ENCODE measurements at regions of chr13 and their contacts with region 1.

Region 1: GRCh38 chr13:51844862-51845573 is at the start of gene TMEM272:
- DNase-seq: peak; percentile 87
- H3K4me3 ChIP-seq: peak within 1 kb of the TSS; percentile 25 to 57
- H3K27ac ChIP-seq: no peak within 1 kb of the TSS
- H3K4me1 ChIP-seq: peaks cover 2 to 7% of the 10 kb centered on the region in 2 experiments; a peak in 2 of 4 replicates
- H3K27me3 ChIP-seq: no peaks in the 10 kb centered on the region
- CTCF ChIP-seq: peak; percentile 84
- EP300 ChIP-seq: no peak
- RAD21 ChIP-seq: peak; percentile 51
- polyA plus RNA-seq, gene TMEM272: not detected in 2 replicates

Region 2: DNA sequence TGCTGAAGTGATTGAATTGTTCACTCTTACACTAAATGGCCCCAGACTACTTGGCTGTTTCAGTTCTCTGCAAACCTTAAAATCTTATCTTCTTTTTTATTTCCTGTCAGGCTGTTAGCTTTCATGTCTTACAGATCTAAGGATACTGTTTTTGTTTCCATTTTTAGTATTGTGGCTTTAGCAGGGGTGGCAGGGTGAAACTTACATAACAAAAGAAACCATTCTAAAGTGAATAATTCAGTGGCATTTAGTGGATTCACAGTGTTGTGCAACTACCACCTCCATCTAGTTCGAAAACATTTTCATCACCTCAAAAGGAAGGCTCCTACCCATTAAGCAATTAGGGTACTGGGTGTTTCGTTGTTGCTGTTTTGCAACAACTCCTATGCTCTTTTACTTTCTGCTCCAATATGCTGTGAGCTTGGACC is 19.8 kb before region 1 on chr13:
- CTCF ChIA-PET with region 1: interaction called, 26 read pairs
- POLR2A ChIA-PET with region 1: no interaction called
- DNase-seq: no peak
- H3K4me3 ChIP-seq: no peak overlapping the region
- H3K27ac ChIP-seq: no peak overlapping the region; a peak in 1 of 4 replicates
- H3K4me1 ChIP-seq: peaks cover 0 to 16% of the 10 kb centered on the region in 2 experiments; a peak in 1 of 4 replicates
- H3K27me3 ChIP-seq: no peaks in the 10 kb centered on the region; the same call in none of the 2 replicates
- CTCF ChIP-seq: no peak
- EP300 ChIP-seq: no peak
- RAD21 ChIP-seq: no peak

Region 3: GRCh38 chr13:51832471-51833152 is 12.4 kb before region 1 on chr13:
- CTCF ChIA-PET with region 1: interaction called, 36 read pairs
- POLR2A ChIA-PET with region 1: no interaction called
- DNase-seq: peak; percentile 39
- H3K4me3 ChIP-seq: no peak overlapping the region
- H3K27ac ChIP-seq: no peak overlapping the region
- H3K4me1 ChIP-seq: peaks cover 0 to 3% of the 10 kb centered on the region in 2 experiments; a peak in 1 of 4 replicates
- H3K27me3 ChIP-seq: no peaks in the 10 kb centered on the region; the same call in none of the 2 replicates
- CTCF ChIP-seq: peak; percentile 35
- EP300 ChIP-seq: no peak
- RAD21 ChIP-seq: peak; percentile 67

Region 4: DNA sequence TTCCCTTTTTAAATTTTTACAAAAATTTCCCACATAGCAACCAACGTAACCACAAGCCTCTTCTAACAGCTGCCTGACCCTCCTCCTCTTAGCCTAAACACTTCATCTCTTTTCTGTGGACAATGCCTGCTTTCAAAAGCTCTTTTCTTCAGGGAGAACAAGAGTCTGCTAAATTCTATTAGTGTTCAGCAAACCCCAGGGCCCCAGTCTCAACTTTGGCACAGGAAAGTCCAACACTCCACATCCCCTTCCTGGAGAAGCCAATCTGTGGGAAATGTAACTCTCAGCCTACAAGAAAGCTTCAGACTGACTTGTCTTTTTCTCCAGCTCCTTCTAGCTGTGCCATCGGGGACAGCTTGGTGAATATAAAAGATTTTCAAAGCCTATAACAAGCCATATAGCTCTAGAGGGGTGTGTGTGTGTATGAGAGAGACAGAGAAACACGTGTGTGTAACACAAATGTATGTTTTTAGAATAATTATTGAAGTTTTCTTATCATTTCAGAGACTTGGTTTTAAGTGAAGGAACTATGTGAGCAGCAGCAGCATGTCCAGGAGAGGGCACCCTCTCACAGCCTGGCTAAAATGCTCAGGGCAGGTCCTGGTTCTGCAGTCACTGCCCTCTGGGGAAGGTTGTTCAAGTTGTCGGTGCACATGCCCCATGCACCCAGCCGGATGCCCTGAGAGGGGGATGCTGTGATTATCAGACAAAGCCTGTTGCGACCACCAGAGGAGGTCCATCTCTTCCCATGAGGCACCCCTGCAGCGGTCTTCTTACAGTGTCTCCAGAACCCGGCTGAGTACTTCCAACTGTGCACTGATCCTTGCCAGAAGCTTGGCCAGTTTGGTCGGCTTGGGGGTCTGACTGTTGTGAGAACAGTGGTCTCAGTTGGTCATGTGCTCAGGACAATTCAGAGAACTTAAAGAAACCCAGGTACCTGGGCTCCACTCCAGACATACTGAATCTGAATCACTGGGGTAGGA is 51.2 kb after region 1 on chr13:
- CTCF ChIA-PET with region 1: no interaction called
- POLR2A ChIA-PET with region 1: no interaction called
- DNase-seq: peak; percentile 62
- H3K4me3 ChIP-seq: no peak overlapping the region; a peak in 1 of 4 replicates
- H3K27ac ChIP-seq: no peak overlapping the region
- H3K4me1 ChIP-seq: peaks cover 0 to 18% of the 10 kb centered on the region in 2 experiments; a peak in 1 of 4 replicates
- H3K27me3 ChIP-seq: no peaks in the 10 kb centered on the region
- CTCF ChIP-seq: peak; percentile 79
- EP300 ChIP-seq: no peak
- RAD21 ChIP-seq: peak; percentile 74

Region 5: DNA sequence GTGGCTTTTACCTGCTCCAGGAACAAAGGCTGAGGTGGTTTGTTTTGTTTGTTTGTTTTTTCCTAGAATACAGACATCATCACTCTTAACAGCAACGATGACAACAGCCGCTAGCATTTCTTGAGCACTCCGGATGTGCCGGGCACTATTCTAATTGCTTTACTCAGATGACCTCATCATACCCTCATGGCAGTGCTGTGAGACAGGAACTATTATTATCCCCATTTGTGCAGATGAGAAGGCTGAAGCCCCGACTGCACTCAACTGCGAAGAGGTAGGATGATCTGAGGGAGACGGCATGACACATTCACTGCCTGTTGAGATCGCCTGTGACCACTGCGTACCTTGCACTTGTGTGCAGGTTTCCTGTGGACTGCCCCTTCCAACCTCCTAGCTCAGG is 83.2 kb after region 1 on chr13:
- CTCF ChIA-PET with region 1: no interaction called
- POLR2A ChIA-PET with region 1: no interaction called
- DNase-seq: no peak
- H3K4me3 ChIP-seq: no peak overlapping the region
- H3K27ac ChIP-seq: no peak overlapping the region
- H3K4me1 ChIP-seq: peaks cover 0 to 3% of the 10 kb centered on the region in 2 experiments; a peak in 1 of 4 replicates
- H3K27me3 ChIP-seq: no peaks in the 10 kb centered on the region
- CTCF ChIP-seq: no peak
- EP300 ChIP-seq: no peak
- RAD21 ChIP-seq: no peak

Region 6: GRCh38 chr13:52085421-52085820 is 240.4 kb after region 1 on chr13:
- CTCF ChIA-PET with region 1: no interaction called
- POLR2A ChIA-PET with region 1: no interaction called
- DNase-seq: no peak
- H3K4me3 ChIP-seq: no peak overlapping the region
- H3K27ac ChIP-seq: no peak overlapping the region
- H3K4me1 ChIP-seq: no peaks in the 10 kb centered on the region
- H3K27me3 ChIP-seq: no peaks in the 10 kb centered on the region
- CTCF ChIP-seq: no peak
- EP300 ChIP-seq: no peak
- RAD21 ChIP-seq: no peak